Heart right ventricle (tissue), 16 donors: ENCODE measurements at regions of chr1 and their contacts with region 1.

Region 1: GRCh38 chr1:119662034-119662437 is 14.0 kb upstream of the ZNF697 start:
- DNase-seq: no peak
- ATAC-seq: no peak
- H3K4me3 ChIP-seq: no peak overlapping the region
- H3K27ac ChIP-seq: no peak overlapping the region
- H3K4me1 ChIP-seq: peaks cover 0 to 9% (median 0%) of the 10 kb centered on the region in 9 donors
- H3K27me3 ChIP-seq: no peaks in the 10 kb centered on the region
- CTCF ChIP-seq: no peak

Region 2: DNA sequence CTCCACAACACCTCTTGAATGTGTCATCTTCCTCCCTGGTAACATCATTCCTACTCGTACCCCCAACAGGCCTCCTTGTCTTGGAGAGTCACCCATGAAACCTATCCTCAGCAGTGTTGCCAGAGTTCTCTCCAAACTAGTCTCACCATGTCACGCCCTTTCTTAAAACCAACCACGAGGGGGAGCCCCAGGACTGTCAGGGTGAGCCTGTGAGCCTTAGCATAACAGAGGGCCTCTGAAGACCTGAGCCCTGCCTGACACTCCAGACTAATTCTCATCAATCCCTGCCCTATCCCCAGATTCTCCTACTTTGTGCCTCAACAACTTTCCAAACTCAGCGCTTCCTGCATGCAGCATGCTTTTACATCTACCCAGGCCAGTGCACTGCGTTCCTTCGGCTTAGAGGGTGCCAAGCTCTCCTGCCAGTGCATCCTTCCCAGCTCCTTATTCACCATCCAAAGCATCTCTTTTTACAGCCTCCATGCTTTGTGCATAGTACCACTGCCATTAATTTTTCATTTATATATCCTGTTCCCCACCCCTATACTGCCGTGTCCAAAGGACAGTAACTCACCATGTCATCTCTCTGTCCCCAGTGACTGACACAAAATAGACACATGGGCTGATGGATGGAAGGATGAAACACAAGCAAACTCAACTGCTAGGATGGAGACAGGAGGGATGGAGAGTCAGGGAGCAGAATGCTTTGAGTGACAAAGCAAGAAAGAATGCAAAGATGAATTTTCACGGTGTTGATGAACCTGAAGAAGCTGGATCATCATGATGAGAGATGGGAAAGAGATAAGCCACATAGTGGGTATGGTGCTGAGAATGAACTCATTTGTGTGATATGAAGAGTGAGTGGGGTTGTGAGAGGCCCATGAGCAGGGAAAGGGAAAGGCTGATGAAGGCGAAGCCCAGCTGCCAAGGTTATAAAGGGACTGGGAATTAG is 48.0 kb before region 1 on chr1:
- intact Hi-C with region 1: loop called (anchors 1 to 5 kb)
- DNase-seq: peak; percentile 76 to 88
- ATAC-seq: peak; percentile 89 to 96 (median 92)
- H3K4me3 ChIP-seq: no peak overlapping the region
- H3K27ac ChIP-seq: no peak overlapping the region
- H3K4me1 ChIP-seq: peaks cover 4 to 41% (median 23%) of the 10 kb centered on the region in 9 donors
- H3K27me3 ChIP-seq: no peaks in the 10 kb centered on the region
- CTCF ChIP-seq: peak; percentile 74 to 96 (median 88)

Region 3: GRCh38 chr1:119771016-119771415 is 109.0 kb after region 1 on chr1:
- intact Hi-C with region 1: no loop called
- DNase-seq: peak in 1 of 2 donors; percentile 30
- ATAC-seq: no peak
- H3K4me3 ChIP-seq: no peak overlapping the region
- H3K27ac ChIP-seq: no peak overlapping the region
- H3K4me1 ChIP-seq: peaks cover 0 to 23% (median 13%) of the 10 kb centered on the region in 9 donors
- H3K27me3 ChIP-seq: no peaks in the 10 kb centered on the region
- CTCF ChIP-seq: no peak

Region 4: DNA sequence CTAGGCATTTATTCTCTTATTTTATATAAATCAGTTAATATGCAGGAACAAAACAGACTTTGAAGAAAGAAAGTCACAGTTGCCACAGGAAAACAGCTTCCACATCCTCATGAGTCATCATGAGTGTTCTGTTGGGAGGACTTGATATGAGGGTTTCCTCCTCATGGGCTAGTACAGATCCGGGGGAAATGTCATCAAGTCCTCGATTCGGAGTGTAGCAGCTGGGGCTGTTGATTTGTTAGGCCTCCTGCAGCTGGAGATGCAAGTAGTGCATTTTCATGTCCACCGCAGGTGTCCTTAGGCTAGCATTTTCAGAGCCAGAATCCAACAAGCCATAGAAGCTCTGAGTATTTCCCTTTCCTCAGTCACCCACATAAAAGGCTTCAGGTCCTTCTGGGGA is 197.6 kb after region 1 on chr1:
- intact Hi-C with region 1: no loop called
- DNase-seq: no peak
- ATAC-seq: no peak
- H3K4me3 ChIP-seq: no peak overlapping the region
- H3K27ac ChIP-seq: peak overlapping the region in 1 of 10 donors; percentile 16
- H3K4me1 ChIP-seq: peaks cover 0 to 16% (median 0%) of the 10 kb centered on the region in 9 donors
- H3K27me3 ChIP-seq: peaks cover 0 to 10% (median 6%) of the 10 kb centered on the region in 7 donors
- CTCF ChIP-seq: no peak